Calu3 (cell line): ENCODE measurements at regions of chr19 and their contacts with region 1.

Region 1: DNA sequence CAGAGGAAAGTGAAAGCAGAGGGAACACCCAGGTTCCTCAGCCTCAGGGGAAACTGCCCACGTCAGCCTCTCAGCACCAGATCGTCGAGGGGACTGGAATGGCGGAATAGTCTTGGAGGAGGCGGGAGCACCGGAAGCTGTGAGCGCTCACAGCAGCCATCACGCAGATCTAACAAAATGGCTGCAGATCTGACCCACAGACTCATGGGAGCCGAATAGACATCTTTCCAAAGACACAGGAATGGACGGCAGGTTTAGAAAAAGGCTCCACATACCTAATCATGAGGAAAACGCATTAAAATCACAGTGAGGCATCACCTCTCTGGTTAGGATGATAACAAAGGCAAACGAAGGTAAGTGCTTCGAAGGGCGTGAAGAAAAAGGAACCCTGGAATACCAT is 11.8 kb upstream of the LILRA2 start:
- DNase-seq: no peak
- H3K4me3 Mint-ChIP-seq: no peak overlapping the region
- H3K27ac Mint-ChIP-seq: no peak overlapping the region
- H3K4me1 Mint-ChIP-seq: no peaks in the 10 kb centered on the region
- H3K27me3 Mint-ChIP-seq: peaks cover 14% of the 10 kb centered on the region
- CTCF ChIP-seq: no peak

Region 2: DNA sequence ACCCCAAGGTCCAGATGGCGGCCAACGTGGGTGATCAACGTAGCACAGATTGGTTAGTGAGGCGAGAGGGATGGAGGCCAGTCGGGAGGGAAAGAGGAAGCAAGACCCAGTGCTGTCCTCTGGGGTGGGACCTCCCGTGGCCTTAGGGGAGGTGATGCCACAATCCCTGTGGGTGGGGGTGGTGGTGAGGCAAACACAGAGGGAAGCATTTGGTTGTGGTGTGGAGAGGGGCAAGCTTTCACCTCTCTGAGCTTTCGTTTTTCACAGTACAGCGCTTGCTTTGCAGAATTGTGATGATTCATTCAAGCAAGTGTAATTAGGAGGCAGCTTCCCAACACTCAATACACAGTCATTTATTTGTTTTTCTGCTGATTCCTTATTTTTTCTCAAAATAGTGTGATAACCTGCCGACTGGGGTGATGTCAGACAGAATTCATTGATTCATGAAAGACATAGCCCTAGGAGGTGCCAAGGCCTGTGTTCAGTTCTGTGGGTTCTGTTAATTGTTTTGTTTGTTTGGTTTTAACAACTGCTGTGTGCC is 110.4 kb before region 1 on chr19:
- CTCF ChIA-PET with region 1: no interaction called
- intact Hi-C with region 1: no loop called
- DNase-seq: no peak
- H3K4me3 Mint-ChIP-seq: peak overlapping the region; percentile 81
- H3K27ac Mint-ChIP-seq: peak overlapping the region; percentile 92
- H3K4me1 Mint-ChIP-seq: peaks cover 16% of the 10 kb centered on the region
- H3K27me3 Mint-ChIP-seq: no peaks in the 10 kb centered on the region
- CTCF ChIP-seq: no peak

Region 3: GRCh38 chr19:54481322-54481930 is 80.4 kb before region 1 on chr19:
- CTCF ChIA-PET with region 1: no interaction called
- intact Hi-C with region 1: loop called (anchors 10 kb)
- DNase-seq: peak; percentile 62
- H3K4me3 Mint-ChIP-seq: no peak overlapping the region
- H3K27ac Mint-ChIP-seq: no peak overlapping the region
- H3K4me1 Mint-ChIP-seq: no peaks in the 10 kb centered on the region
- H3K27me3 Mint-ChIP-seq: peaks cover 64% of the 10 kb centered on the region
- CTCF ChIP-seq: peak; percentile 58

Region 4: GRCh38 chr19:54630782-54631181 is 68.9 kb after region 1 on chr19:
- CTCF ChIA-PET with region 1: no interaction called
- intact Hi-C with region 1: no loop called
- DNase-seq: no peak
- H3K4me3 Mint-ChIP-seq: no peak overlapping the region
- H3K27ac Mint-ChIP-seq: no peak overlapping the region
- H3K4me1 Mint-ChIP-seq: peaks cover 7% of the 10 kb centered on the region
- H3K27me3 Mint-ChIP-seq: peaks cover 77% of the 10 kb centered on the region
- CTCF ChIP-seq: no peak